Mammary epithelial cell (primary cell): ENCODE measurements at regions of chr1 and their contacts with region 1.

Region 1: GRCh38 chr1:38026592-38027200 is 14.2 kb downstream of the UTP11 start:
- DNase-seq: peak; percentile 73
- H3K4me3 ChIP-seq: peak overlapping the region in 2 of 3 experiments; percentile 1 to 12
- H3K27ac ChIP-seq: peak overlapping the region; percentile 19
- H3K4me1 ChIP-seq: peaks cover 65% of the 10 kb centered on the region
- H3K27me3 ChIP-seq: no peaks in the 10 kb centered on the region
- CTCF ChIP-seq: peak; percentile 85 to 95

Region 2: GRCh38 chr1:38046884-38047602 is 20.3 kb after region 1 on chr1:
- CTCF ChIA-PET with region 1: interaction called, 7 read pairs
- dilution Hi-C with region 1: no loop called
- in situ Hi-C with region 1: no loop called
- intact Hi-C with region 1: loop called (anchors 2 kb)
- DNase-seq: peak; percentile 90
- H3K4me3 ChIP-seq: peak overlapping the region; percentile 70 to 87 (median 78)
- H3K27ac ChIP-seq: no peak overlapping the region
- H3K4me1 ChIP-seq: peaks cover 20% of the 10 kb centered on the region
- H3K27me3 ChIP-seq: peaks cover 11% of the 10 kb centered on the region
- CTCF ChIP-seq: peak in 1 of 2 donors; percentile 36

Region 3: GRCh38 chr1:38071312-38072256 is 44.9 kb after region 1 on chr1:
- CTCF ChIA-PET with region 1: no interaction called
- dilution Hi-C with region 1: no loop called
- in situ Hi-C with region 1: no loop called
- intact Hi-C with region 1: no loop called
- DNase-seq: peak; percentile 26
- H3K4me3 ChIP-seq: no peak overlapping the region
- H3K27ac ChIP-seq: no peak overlapping the region
- H3K4me1 ChIP-seq: peaks cover 7% of the 10 kb centered on the region
- H3K27me3 ChIP-seq: no peaks in the 10 kb centered on the region
- CTCF ChIP-seq: peak in 1 of 2 donors; percentile 44

Region 4: GRCh38 chr1:38138498-38139233 is 112.0 kb after region 1 on chr1:
- CTCF ChIA-PET with region 1: no interaction called
- dilution Hi-C with region 1: no loop called
- in situ Hi-C with region 1: no loop called
- intact Hi-C with region 1: loop called (anchors 5 kb)
- DNase-seq: peak; percentile 90
- H3K4me3 ChIP-seq: no peak overlapping the region
- H3K27ac ChIP-seq: peak overlapping the region; percentile 36
- H3K4me1 ChIP-seq: peaks cover 27% of the 10 kb centered on the region
- H3K27me3 ChIP-seq: peaks cover 2% of the 10 kb centered on the region
- CTCF ChIP-seq: peak; percentile 38 to 48

Region 5: DNA sequence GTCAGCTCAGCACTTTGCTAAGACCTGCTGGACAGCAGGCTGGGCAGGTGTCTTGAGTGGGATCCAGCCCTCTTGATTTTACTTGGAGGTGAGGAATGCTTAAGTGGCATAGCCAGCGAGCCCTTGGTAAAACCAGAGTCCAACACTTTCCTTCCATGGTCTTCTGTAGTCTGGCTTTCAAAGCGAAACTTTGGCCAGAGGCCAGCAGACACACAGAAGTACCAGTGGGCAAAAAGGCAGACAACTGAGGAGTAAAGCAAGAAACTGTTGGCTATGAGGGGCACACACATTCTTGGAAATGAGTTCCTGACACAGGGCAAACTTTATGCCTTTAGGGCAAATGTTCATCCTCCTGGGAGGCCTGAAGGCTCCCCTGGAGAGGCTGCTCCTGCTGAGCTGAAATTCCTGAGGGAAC is 300.9 kb after region 1 on chr1:
- CTCF ChIA-PET with region 1: no interaction called
- dilution Hi-C with region 1: no loop called
- in situ Hi-C with region 1: no loop called
- intact Hi-C with region 1: loop called (anchors 10 kb)
- DNase-seq: no peak
- H3K4me3 ChIP-seq: no peak overlapping the region
- H3K27ac ChIP-seq: no peak overlapping the region
- H3K4me1 ChIP-seq: no peaks in the 10 kb centered on the region
- H3K27me3 ChIP-seq: peaks cover 5% of the 10 kb centered on the region
- CTCF ChIP-seq: no peak

Region 6: GRCh38 chr1:38586993-38587646 is 560.4 kb after region 1 on chr1:
- CTCF ChIA-PET with region 1: no interaction called
- dilution Hi-C with region 1: no loop called
- in situ Hi-C with region 1: loop called in 1 of 2 experiments (anchors 25 kb)
- intact Hi-C with region 1: loop called (anchors 1 kb)
- DNase-seq: peak; percentile 15
- H3K4me3 ChIP-seq: no peak overlapping the region
- H3K27ac ChIP-seq: no peak overlapping the region
- H3K4me1 ChIP-seq: no peaks in the 10 kb centered on the region
- H3K27me3 ChIP-seq: no peaks in the 10 kb centered on the region
- CTCF ChIP-seq: peak; percentile 92 to 94

Region 7: DNA sequence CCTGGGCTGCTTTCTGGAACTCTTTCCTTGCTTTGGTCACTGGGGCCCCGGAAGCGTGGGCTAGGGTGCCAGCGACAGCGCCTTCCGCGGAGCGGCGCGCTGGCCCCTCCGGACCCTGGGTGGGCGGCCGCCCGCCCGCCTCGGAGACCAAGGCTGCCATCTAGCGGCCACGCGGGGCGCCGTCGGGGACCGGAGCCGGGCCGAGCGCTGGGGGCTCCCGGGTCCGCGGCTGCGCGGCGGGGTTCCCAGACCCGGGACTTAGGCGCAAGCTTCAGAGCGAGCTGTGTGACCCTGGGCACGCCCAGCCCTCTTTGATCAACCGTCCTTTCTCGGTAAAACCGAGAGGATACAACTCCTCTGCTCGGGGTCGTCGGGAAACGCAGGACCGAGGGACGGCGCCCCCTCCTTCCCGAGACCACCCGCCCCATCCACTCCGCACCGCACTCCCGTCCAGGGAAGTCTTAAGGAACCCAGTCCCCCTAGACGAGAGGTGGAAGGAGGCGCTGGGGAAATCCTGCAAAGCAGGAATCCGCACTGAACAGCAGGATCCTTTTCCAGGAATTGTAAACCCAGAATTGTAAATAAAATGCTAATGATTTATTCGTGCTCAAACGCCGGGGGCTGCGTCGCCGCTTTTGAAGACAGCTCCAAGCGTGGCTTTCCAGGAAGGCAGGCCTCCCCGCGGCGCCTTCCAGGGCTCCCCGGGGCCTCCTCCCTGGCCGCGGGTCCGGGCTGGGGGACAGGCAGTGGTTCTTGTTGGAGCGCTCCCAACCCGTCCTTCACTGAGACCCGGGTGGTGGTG is 791.7 kb after region 1 on chr1:
- CTCF ChIA-PET with region 1: interaction called, 11 read pairs
- dilution Hi-C with region 1: no loop called
- in situ Hi-C with region 1: loop called in 1 of 2 experiments (anchors 5 kb)
- intact Hi-C with region 1: loop called (anchors 1 kb)
- DNase-seq: no peak
- H3K4me3 ChIP-seq: no peak overlapping the region
- H3K27ac ChIP-seq: no peak overlapping the region
- H3K4me1 ChIP-seq: peaks cover 3% of the 10 kb centered on the region
- H3K27me3 ChIP-seq: peaks cover 5% of the 10 kb centered on the region
- CTCF ChIP-seq: peak; percentile 54 to 59

Region 8: DNA sequence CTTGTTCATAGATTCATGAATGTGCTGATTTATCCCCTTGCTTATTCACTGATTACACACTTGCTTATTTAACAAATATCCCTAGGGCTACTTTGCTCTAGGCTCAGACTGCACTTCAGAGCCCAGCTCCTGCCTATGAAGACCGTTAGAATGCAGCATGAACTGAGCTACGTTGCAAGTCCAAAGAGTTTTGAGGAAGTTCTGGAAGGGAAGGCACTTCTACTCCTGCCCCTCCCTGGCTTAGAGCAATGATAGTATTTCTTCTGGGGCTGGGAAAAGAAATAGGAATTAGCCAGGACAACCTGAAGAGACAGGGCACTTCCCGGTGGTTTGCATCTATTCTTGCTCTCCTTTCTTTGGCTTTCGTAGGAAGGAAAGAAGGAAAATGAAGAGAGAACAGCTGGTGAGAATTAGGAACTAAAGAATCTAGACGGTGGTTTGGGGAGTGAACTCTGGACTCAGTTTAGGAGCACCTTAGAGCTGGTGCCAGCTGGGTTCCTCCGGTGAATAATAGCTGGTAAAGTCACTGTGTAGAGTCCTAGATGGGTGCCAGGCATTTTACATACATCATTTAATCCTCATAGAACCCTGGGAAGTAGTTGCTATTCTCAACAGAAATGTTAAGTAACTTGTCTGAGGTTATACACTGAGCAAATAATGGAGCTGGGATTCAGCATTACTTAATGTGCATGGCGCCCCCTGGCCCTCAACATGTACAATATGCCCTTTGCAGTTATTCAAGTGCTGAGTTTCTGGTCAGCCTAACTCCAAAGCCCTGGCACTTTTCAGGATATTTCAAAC is 1065.3 kb after region 1 on chr1:
- CTCF ChIA-PET with region 1: no interaction called
- dilution Hi-C with region 1: no loop called
- in situ Hi-C with region 1: no loop called
- intact Hi-C with region 1: loop called (anchors 5 kb)
- DNase-seq: peak; percentile 54
- H3K4me3 ChIP-seq: no peak overlapping the region
- H3K27ac ChIP-seq: no peak overlapping the region
- H3K4me1 ChIP-seq: peaks cover 14% of the 10 kb centered on the region
- H3K27me3 ChIP-seq: no peaks in the 10 kb centered on the region
- CTCF ChIP-seq: peak; percentile 79 to 82